Right ventricle myocardium inferior (tissue), 1 donor: ENCODE measurements at regions of chr9 and their contacts with region 1.

Region 1: GRCh38 chr9:121692606-121693387 is 41.4 kb downstream of the DAB2IP start:
- DNase-seq: peak; percentile 23
- ATAC-seq: peak; percentile 43

Region 2: GRCh38 chr9:121640076-121640475 is 52.7 kb before region 1 on chr9:
- intact Hi-C with region 1: loop called (anchors 5 kb)
- DNase-seq: no peak
- ATAC-seq: peak; percentile 58

Region 3: GRCh38 chr9:121650217-121651007 is 42.4 kb before region 1 on chr9:
- intact Hi-C with region 1: no loop called
- DNase-seq: no peak
- ATAC-seq: peak; percentile 25

Region 4: DNA sequence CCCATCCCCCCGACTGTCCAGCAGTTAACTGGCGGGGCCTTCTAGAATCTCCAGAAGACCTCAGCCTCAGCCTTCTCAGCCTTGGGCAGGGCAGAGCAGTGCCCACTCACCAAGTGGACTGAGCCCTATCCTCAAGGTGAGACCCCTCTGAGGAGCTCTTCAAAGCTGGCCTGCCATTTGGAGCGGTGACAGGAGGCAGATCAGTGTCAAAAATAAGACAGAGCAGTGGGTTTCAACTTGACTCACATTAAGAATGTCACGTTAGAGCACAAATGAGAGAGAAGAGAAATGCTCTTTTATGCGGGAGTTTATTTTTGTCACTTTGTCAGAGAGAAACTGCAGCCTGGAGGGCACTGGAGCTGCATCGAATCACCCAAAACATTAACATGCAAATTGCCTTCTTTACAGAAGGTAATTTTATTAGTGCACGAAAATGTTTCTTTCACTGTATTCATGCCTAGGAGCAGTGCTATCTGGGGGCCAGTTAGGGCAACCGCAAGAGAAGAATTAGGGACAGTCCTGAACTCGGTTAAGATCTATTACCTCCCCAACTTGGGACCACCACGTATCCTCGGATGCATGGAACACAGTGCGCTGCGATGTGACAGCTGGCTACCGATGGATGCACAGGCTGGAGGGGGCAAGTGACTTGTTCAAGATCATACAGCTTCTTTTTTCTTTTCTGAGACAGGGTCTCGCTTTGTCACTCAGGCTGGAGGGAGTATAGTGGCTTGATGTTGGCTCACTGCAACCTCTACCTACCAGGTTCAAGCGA is 147.1 kb after region 1 on chr9:
- intact Hi-C with region 1: no loop called
- DNase-seq: no peak
- ATAC-seq: no peak